GM12878 (cell line): ENCODE measurements at regions of chr7 and their contacts with region 1.

Region 1: GRCh38 chr7:14899030-14899429 is 3.5 kb downstream of the DGKB start:
- DNase-seq: no peak
- ATAC-seq: no peak
- H3K4me3 ChIP-seq: no peak overlapping the region
- H3K27ac ChIP-seq: no peak overlapping the region
- H3K4me1 ChIP-seq: no peaks in the 10 kb centered on the region
- H3K27me3 ChIP-seq: no peaks in the 10 kb centered on the region; a peak in 1 of 4 replicates
- CTCF ChIP-seq: no peak
- EP300 ChIP-seq: no peak
- POLR2A ChIP-seq: no peak
- RAD21 ChIP-seq: no peak

Region 2: GRCh38 chr7:14846148-14846804 is 52.8 kb before region 1 on chr7:
- CTCF ChIA-PET with region 1: no interaction called
- POLR2A ChIA-PET with region 1: no interaction called
- RAD21 ChIA-PET with region 1: no interaction called
- SMC1A ChIA-PET with region 1: no interaction called
- in situ Hi-C with region 1: no loop called
- intact Hi-C with region 1: loop called (anchors 5 kb)
- DNase-seq: no peak
- ATAC-seq: no peak
- H3K4me3 ChIP-seq: no peak overlapping the region
- H3K27ac ChIP-seq: no peak overlapping the region
- H3K4me1 ChIP-seq: no peaks in the 10 kb centered on the region
- H3K27me3 ChIP-seq: no peaks in the 10 kb centered on the region
- CTCF ChIP-seq: no peak
- EP300 ChIP-seq: no peak
- POLR2A ChIP-seq: no peak
- RAD21 ChIP-seq: no peak

Region 3: DNA sequence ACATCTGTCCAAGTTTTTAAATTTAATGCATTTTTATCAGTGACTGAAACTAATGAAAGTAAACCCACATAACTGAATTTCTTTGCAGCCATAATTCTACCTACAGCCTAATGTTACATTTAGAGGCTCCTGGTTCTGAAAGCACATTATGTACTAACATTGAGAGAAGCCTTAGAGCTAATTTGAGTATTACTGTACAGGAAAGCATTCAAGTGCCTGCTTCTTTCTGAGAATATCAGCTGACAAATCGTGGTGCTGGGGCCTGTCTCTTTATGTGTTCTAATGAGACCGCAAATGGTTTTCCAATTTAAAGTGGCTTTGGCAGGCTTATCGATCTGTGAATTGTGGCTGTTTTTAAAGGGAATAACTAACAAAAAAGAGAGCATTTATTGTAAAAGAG is 35.8 kb after region 1 on chr7:
- CTCF ChIA-PET with region 1: no interaction called
- POLR2A ChIA-PET with region 1: no interaction called
- RAD21 ChIA-PET with region 1: no interaction called
- SMC1A ChIA-PET with region 1: no interaction called
- in situ Hi-C with region 1: no loop called
- intact Hi-C with region 1: no loop called
- DNase-seq: no peak
- ATAC-seq: no peak
- H3K4me3 ChIP-seq: no peak overlapping the region
- H3K27ac ChIP-seq: no peak overlapping the region
- H3K4me1 ChIP-seq: no peaks in the 10 kb centered on the region
- H3K27me3 ChIP-seq: no peaks in the 10 kb centered on the region
- CTCF ChIP-seq: no peak
- EP300 ChIP-seq: no peak
- POLR2A ChIP-seq: no peak
- RAD21 ChIP-seq: no peak